Activated CD4-positive, alpha-beta T cell treated with anti-CD3 and anti-CD28 coated beads, Interleukin-2, amount 10 ng/mL, durations not matched to agents 24 days and 14 days (primary cell): ENCODE measurements at regions of chr1 and their contacts with region 1.

Region 1: DNA sequence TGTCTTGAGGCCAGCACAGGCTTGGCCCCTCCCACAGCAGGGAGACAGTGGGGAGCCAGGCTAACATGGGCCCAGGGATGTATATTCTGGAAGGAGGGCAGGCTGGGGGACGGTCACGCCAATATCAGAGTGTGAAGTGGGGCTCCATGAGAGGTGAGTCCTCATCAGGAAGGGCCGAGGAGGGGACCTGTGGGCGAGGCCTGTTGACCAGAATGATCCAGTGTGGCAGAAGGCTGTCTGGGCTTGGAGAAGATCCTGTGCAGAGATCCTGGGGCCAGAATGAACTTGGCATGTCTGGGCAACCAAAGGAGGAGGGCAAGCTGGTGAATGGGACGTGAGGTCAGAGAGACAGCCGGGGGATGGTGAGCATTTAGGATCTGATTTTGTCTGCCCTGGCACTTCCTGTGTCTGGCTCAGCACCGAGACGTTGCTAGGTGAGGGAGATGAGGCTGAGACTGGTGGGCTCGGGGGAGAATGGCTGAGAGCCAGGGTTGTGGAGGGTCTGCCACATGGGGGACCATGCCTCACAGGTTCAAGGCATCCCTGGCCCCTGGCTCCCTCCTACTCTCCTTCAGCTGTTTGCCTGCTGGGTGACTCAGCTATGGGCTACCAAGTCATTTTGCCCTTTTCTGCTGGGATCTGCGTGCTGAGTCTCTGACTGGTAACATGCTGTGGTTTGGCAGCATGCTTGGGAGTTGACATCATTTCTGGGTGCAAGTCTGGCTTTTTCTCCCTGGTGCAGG is 17.3 kb downstream of the GALNT2 start:
- DNase-seq: peak; percentile 76
- H3K4me3 Mint-ChIP-seq: peak overlapping the region; percentile 36
- H3K27ac Mint-ChIP-seq: peak overlapping the region; percentile 76
- H3K4me1 Mint-ChIP-seq: peaks cover 63% of the 10 kb centered on the region
- H3K27me3 Mint-ChIP-seq: no peaks in the 10 kb centered on the region

Region 2: GRCh38 chr1:230120926-230121381 is 36.6 kb after region 1 on chr1:
- intact Hi-C with region 1: loop called (anchors 1 kb)
- DNase-seq: no peak
- H3K4me3 Mint-ChIP-seq: no peak overlapping the region
- H3K27ac Mint-ChIP-seq: no peak overlapping the region
- H3K4me1 Mint-ChIP-seq: peaks cover 64% of the 10 kb centered on the region
- H3K27me3 Mint-ChIP-seq: no peaks in the 10 kb centered on the region